Heart right ventricle (tissue), 16 donors: ENCODE measurements at regions of chr5 and their contacts with region 1.

Region 1: GRCh38 chr5:132283423-132284043 is 10.7 kb upstream of the SLC22A4 start:
- DNase-seq: peak in 1 of 2 donors; percentile 43
- ATAC-seq: peak in 7 of 8 donors; percentile 54 to 77 (median 69)
- H3K4me3 ChIP-seq: no peak overlapping the region
- H3K27ac ChIP-seq: no peak overlapping the region
- H3K4me1 ChIP-seq: peaks cover 0 to 5% (median 0%) of the 10 kb centered on the region in 9 donors
- H3K27me3 ChIP-seq: no peaks in the 10 kb centered on the region
- CTCF ChIP-seq: peak; percentile 38 to 67 (median 57)

Region 2: GRCh38 chr5:132073231-132074013 is 210.1 kb before region 1 on chr5 and contains the start of gene CSF2:
- intact Hi-C with region 1: no loop called
- DNase-seq: no peak
- ATAC-seq: no peak
- H3K4me3 ChIP-seq: no peak within 1 kb of the TSS
- H3K27ac ChIP-seq: no peak within 1 kb of the TSS
- H3K4me1 ChIP-seq: peaks cover 0 to 8% (median 0%) of the 10 kb centered on the region in 9 donors
- H3K27me3 ChIP-seq: no peaks in the 10 kb centered on the region
- CTCF ChIP-seq: no peak
- total RNA-seq, gene CSF2: not detected

Region 3: GRCh38 chr5:132238169-132238744 is 45.3 kb before region 1 on chr5:
- intact Hi-C with region 1: loop called in 1 of 10 experiments (anchors 5 kb)
- DNase-seq: peak; percentile 54 to 66
- ATAC-seq: peak; percentile 51 to 83 (median 78)
- H3K4me3 ChIP-seq: no peak overlapping the region
- H3K27ac ChIP-seq: no peak overlapping the region
- H3K4me1 ChIP-seq: peaks cover 0 to 2% (median 0%) of the 10 kb centered on the region in 9 donors
- H3K27me3 ChIP-seq: no peaks in the 10 kb centered on the region
- CTCF ChIP-seq: peak; percentile 72 to 88 (median 83)

Region 4: GRCh38 chr5:132674671-132675506 is 391.4 kb after region 1 on chr5:
- intact Hi-C with region 1: no loop called
- DNase-seq: no peak
- ATAC-seq: peak in 6 of 8 donors; percentile 31 to 66 (median 56)
- H3K4me3 ChIP-seq: no peak overlapping the region
- H3K27ac ChIP-seq: peak overlapping the region in 1 of 10 donors; percentile 50
- H3K4me1 ChIP-seq: peaks cover 0 to 21% (median 0%) of the 10 kb centered on the region in 9 donors
- H3K27me3 ChIP-seq: no peaks in the 10 kb centered on the region
- CTCF ChIP-seq: no peak